PC-9 (cell line): ENCODE measurements at regions of chr5 and their contacts with region 1.

Region 1: DNA sequence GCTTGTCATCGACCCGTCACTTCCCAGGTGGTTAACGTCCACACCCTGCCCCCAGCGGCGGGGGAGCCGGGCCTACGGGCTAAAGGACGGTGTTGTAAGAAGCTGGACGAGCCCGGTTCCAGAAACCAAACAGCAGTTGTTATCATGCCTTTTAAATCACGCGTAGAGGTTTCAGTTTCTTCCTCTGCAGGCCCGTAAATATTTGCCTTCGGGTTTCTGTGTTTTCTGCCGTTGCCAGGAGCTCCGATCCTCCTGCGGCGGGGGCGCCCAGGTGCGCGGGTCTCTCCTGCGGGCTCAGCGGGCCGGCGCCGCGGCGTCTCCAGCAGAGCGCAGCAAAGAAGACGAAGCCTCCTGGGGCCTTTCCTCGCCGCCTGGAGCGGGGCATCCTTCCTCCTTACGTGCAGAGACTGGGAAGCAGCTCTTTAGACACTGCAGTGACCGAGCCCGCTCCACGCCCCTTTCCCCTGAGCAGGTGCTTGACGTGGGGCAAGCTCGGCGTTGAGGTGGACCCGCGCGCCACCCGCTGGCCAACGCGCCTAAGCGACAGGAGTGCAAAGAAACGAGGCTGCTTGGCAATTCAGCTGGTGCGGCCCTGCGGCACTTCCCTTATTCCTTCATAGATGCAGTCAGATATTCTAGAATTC is 21.8 kb upstream of the TTC1 start:
- DNase-seq: peak; percentile 85 to 94
- H3K4me3 ChIP-seq: peak overlapping the region; percentile 65; the same call in 1 of the 2 replicates
- H3K27ac ChIP-seq: peak overlapping the region; percentile 55
- H3K4me1 ChIP-seq: peaks cover 13% of the 10 kb centered on the region
- H3K27me3 ChIP-seq: no peaks in the 10 kb centered on the region
- CTCF ChIP-seq: peak; percentile 90

Region 2: GRCh38 chr5:158695595-158696330 is 1291.4 kb before region 1 on chr5:
- CTCF ChIA-PET with region 1: no interaction called
- POLR2A ChIA-PET with region 1: no interaction called
- intact Hi-C with region 1: loop called (anchors 5 kb)
- DNase-seq: peak; percentile 39 to 60
- H3K4me3 ChIP-seq: no peak overlapping the region
- H3K27ac ChIP-seq: no peak overlapping the region
- H3K4me1 ChIP-seq: no peaks in the 10 kb centered on the region
- H3K27me3 ChIP-seq: peaks cover 29% of the 10 kb centered on the region
- CTCF ChIP-seq: peak; percentile 97

Region 3: DNA sequence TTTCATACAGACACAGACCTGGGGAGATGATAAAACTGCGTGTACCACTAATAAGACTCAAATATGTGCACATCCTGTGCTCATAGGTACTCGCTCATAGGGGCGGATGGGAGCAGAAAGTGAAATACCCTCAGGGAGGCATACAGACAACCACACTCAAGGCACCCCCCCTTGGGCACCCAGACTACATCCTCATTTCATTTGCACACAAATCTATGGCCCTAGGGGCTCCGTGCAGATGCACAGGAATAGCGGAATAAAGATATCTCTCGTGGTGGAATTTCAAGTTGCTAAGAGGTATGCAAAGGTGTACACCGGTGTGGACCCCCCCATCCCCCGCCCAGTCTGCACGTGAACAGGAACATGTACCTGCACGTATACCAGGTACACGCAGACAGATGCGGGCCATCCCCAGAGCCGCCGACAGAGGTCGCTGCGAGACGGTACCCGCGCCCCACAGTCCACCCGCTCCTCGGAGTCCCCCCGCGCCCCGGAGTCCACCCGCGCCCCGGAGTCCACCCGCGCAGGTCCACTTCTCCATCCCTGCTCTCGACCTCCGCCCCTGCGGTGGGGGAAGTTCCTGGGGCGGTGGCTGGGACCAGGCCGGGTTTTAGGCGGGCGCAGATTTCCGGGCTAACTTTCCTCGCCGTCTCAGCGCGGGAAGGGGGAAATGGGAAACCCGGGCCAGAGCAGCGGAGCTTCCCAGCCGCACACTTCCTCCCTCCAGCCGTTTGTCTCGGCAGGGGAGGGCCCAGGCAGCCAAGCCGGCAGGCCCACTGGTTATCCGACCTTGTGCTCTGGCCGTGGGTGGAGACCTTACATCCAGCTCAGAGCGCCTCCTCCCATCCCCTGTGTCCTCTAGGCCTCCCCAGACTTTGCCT is 655.8 kb before region 1 on chr5:
- CTCF ChIA-PET with region 1: no interaction called
- POLR2A ChIA-PET with region 1: no interaction called
- intact Hi-C with region 1: loop called (anchors 1 kb)
- DNase-seq: peak in 1 of 2 experiments; percentile 73
- H3K4me3 ChIP-seq: peak overlapping the region; percentile 56; the same call in 1 of the 2 replicates
- H3K27ac ChIP-seq: no peak overlapping the region
- H3K4me1 ChIP-seq: no peaks in the 10 kb centered on the region
- H3K27me3 ChIP-seq: peaks cover 24% of the 10 kb centered on the region
- CTCF ChIP-seq: peak; percentile 87

Region 4: DNA sequence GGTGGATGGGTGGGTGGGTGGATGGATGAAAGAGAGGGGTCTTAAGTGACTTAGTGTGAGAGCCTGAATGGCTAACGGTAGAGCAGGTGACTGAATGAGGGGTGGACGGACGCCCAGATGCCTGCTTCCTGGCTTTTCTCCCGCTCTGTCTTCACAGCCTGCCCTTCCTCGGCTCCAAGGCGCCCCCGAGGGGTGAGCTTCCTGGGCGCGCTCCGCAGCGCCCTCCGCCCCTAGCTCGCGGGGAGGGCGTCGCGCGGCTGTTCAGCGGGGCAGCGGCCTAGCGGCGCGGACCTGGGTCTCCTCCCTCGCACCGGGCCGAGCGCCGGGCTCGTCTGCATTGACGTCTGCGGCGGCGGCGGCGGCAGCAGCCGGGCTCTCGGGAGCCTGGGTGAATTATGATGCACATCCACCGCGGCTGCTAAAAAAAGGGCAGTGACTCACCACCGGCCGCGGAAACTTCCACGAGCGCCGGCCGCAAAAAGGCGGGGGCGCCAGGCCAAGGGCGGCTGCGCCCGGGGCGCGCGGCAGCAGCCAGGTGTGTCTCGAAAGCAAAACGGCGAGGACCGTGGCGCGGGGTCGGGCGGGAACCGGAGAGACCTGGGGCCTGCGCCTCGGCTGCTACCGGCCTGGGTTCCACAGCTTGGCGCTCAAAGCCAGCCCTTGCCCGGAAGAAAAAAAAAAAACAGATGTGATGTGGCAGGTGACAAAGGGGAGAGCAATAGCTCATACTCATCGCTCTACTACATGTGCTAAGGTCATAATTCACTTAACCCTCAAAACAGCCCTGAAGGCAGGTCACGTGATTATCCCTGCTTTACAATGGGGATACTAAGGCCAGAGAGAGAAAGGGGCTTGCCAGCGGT is 213.9 kb before region 1 on chr5:
- CTCF ChIA-PET with region 1: no interaction called
- POLR2A ChIA-PET with region 1: no interaction called
- intact Hi-C with region 1: loop called (anchors 2 kb)
- DNase-seq: peak; percentile 71 to 83
- H3K4me3 ChIP-seq: peak overlapping the region; percentile 61
- H3K27ac ChIP-seq: peak overlapping the region; percentile 66
- H3K4me1 ChIP-seq: peaks cover 33% of the 10 kb centered on the region
- H3K27me3 ChIP-seq: no peaks in the 10 kb centered on the region
- CTCF ChIP-seq: peak; percentile 38; the same call in 1 of the 2 replicates

Region 5: GRCh38 chr5:159805021-159805420 is 182.1 kb before region 1 on chr5:
- CTCF ChIA-PET with region 1: no interaction called
- POLR2A ChIA-PET with region 1: no interaction called
- intact Hi-C with region 1: no loop called
- DNase-seq: no peak
- H3K4me3 ChIP-seq: no peak overlapping the region
- H3K27ac ChIP-seq: no peak overlapping the region
- H3K4me1 ChIP-seq: no peaks in the 10 kb centered on the region
- H3K27me3 ChIP-seq: no peaks in the 10 kb centered on the region
- CTCF ChIP-seq: no peak

Region 6: GRCh38 chr5:159864885-159865691 is 122.1 kb before region 1 on chr5:
- CTCF ChIA-PET with region 1: no interaction called
- POLR2A ChIA-PET with region 1: no interaction called
- intact Hi-C with region 1: no loop called
- DNase-seq: no peak
- H3K4me3 ChIP-seq: no peak overlapping the region
- H3K27ac ChIP-seq: no peak overlapping the region
- H3K4me1 ChIP-seq: 0 out of 2 replicates have a peak, but pooled peaks cover 8% of the 10 kb centered on the region
- H3K27me3 ChIP-seq: no peaks in the 10 kb centered on the region
- CTCF ChIP-seq: no peak

Region 7: GRCh38 chr5:160245506-160246086 is 258.4 kb after region 1 on chr5:
- CTCF ChIA-PET with region 1: no interaction called
- POLR2A ChIA-PET with region 1: no interaction called
- intact Hi-C with region 1: no loop called
- DNase-seq: no peak
- H3K4me3 ChIP-seq: no peak overlapping the region
- H3K27ac ChIP-seq: no peak overlapping the region
- H3K4me1 ChIP-seq: no peaks in the 10 kb centered on the region
- H3K27me3 ChIP-seq: no peaks in the 10 kb centered on the region
- CTCF ChIP-seq: no peak

Region 8: DNA sequence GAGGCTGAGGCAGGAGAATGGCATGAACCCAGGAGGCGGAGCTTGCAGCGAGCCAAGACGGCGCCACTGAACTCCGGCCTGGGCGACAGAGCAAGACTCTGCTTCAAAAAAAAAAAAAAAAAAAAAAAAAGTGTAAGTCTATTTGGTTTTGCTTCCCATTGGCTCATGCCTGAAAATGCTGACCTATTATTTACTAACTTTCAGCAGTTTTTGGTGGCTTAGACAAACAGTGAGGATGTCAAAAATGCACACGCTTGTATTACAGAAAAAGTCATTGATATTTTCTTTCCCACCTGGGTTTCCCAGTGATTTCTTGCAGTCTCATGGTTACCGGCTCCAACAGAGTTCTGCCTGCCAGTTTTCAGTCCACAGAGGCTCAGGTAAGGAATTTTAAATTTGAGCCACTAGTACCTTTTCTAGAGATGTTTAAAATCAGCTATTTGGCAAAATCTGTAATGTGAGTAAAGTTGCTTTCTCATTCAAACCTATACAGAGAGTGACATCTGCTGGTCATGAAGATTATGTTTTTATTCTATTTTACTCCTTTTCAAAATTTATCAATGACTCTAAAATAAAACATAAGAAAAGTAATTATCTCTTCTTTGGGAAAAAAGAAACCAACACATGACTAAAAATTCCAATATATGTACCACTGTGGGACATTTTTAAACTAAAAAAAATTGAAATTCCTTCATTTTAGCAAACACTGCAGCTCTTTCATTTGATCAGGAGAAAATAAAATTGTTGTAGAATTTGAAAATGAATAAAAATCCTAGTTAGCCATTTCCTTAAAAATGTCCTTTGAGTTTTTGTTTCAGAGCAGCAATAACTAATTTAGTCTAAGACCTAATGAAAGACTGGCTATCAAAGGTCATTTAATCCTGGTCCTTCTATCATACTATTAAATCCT is 403.9 kb after region 1 on chr5:
- CTCF ChIA-PET with region 1: no interaction called
- POLR2A ChIA-PET with region 1: no interaction called
- intact Hi-C with region 1: loop called (anchors 1 kb)
- DNase-seq: no peak
- H3K4me3 ChIP-seq: no peak overlapping the region
- H3K27ac ChIP-seq: no peak overlapping the region
- H3K4me1 ChIP-seq: no peaks in the 10 kb centered on the region
- H3K27me3 ChIP-seq: no peaks in the 10 kb centered on the region
- CTCF ChIP-seq: peak; percentile 74